H1 (cell line): ENCODE measurements at regions of chr18 and their contacts with region 1.

Region 1: GRCh38 chr18:60668583-60668982 is 296.0 kb upstream of the MC4R start:
- DNase-seq: no peak
- H3K4me3 ChIP-seq: no peak overlapping the region
- H3K27ac ChIP-seq: no peak overlapping the region
- H3K4me1 ChIP-seq: 0 out of 7 replicates have a peak, but pooled peaks cover 0 to 3% (median 0%) of the 10 kb centered on the region in 4 experiments
- H3K27me3 ChIP-seq: no peaks in the 10 kb centered on the region
- CTCF ChIP-seq: peak in 1 of 3 experiments; percentile 24; a peak in 2 of 4 replicates
- EP300 ChIP-seq: no peak
- POLR2A ChIP-seq: no peak
- RAD21 ChIP-seq: peak; percentile 54 to 64; a peak in 3 of 4 replicates

Region 2: GRCh38 chr18:60543646-60544045 is 124.9 kb before region 1 on chr18:
- CTCF ChIA-PET with region 1: no interaction called
- POLR2A ChIA-PET with region 1: no interaction called
- DNase-seq: no peak
- H3K4me3 ChIP-seq: no peak overlapping the region
- H3K27ac ChIP-seq: no peak overlapping the region
- H3K4me1 ChIP-seq: no peaks in the 10 kb centered on the region
- H3K27me3 ChIP-seq: no peaks in the 10 kb centered on the region
- CTCF ChIP-seq: no peak
- EP300 ChIP-seq: no peak
- POLR2A ChIP-seq: no peak
- RAD21 ChIP-seq: no peak

Region 3: GRCh38 chr18:60684843-60685513 is 16.4 kb after region 1 on chr18:
- CTCF ChIA-PET with region 1: interaction called, 11 read pairs
- POLR2A ChIA-PET with region 1: no interaction called
- DNase-seq: no peak
- H3K4me3 ChIP-seq: no peak overlapping the region
- H3K27ac ChIP-seq: no peak overlapping the region
- H3K4me1 ChIP-seq: no peaks in the 10 kb centered on the region
- H3K27me3 ChIP-seq: no peaks in the 10 kb centered on the region
- CTCF ChIP-seq: peak in 2 of 3 experiments; percentile 17 to 43; a peak in 2 of 4 replicates
- EP300 ChIP-seq: no peak
- POLR2A ChIP-seq: no peak
- RAD21 ChIP-seq: peak; percentile 68 to 78